ENCODE measurements at regions of chr10 and their contacts with region 1.

Region 1: GRCh38 chr10:95430231-95430951 is 130.8 kb downstream of the SORBS1 start:
- DNase-seq: peak; percentile 54
- H3K4me3 ChIP-seq: no peak overlapping the region
- H3K27ac ChIP-seq: no peak overlapping the region
- H3K4me1 ChIP-seq: no peaks in the 10 kb centered on the region
- H3K27me3 ChIP-seq: no peaks in the 10 kb centered on the region
- CTCF ChIP-seq: peak; percentile 97

Region 2: DNA sequence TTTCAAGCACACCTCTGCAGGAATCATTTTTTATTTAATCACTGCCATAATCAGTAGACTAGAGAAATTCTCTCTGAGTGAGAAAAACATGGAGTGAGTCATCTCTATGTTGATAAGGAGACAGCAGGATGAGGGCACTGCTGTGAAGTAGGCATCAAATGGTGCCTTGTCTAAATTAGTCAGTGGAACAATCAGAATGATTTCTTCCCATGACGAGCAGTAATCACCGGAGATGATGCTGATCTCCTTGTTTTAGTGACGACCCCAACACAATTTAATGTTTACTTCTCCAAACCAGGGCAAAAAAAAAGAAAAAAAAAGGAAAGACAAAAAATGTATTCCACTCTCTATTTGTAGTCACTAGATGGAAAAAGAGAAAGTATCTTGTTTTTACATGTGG is 55.1 kb after region 1 on chr10:
- intact Hi-C with region 1: no loop called
- DNase-seq: no peak
- H3K4me3 ChIP-seq: no peak overlapping the region
- H3K27ac ChIP-seq: no peak overlapping the region
- H3K4me1 ChIP-seq: no peaks in the 10 kb centered on the region
- H3K27me3 ChIP-seq: no peaks in the 10 kb centered on the region
- CTCF ChIP-seq: no peak

Region 3: GRCh38 chr10:95601116-95601719 is 170.8 kb after region 1 on chr10:
- intact Hi-C with region 1: loop called (anchors 2 kb)
- DNase-seq: peak; percentile 90
- H3K4me3 ChIP-seq: no peak overlapping the region
- H3K27ac ChIP-seq: no peak overlapping the region
- H3K4me1 ChIP-seq: no peaks in the 10 kb centered on the region
- H3K27me3 ChIP-seq: no peaks in the 10 kb centered on the region
- CTCF ChIP-seq: peak; percentile 89